WTC11 (cell line): ENCODE measurements at regions of chr1 and their contacts with region 1.

Region 1: GRCh38 chr1:110554871-110555801 is 36.2 kb upstream of the KCNA10 start:
- DNase-seq: peak; percentile 73
- ATAC-seq: peak; percentile 88
- H3K4me3 Mint-ChIP-seq: peak overlapping the region; percentile 66
- H3K27ac Mint-ChIP-seq: no peak overlapping the region
- H3K4me1 Mint-ChIP-seq: peaks cover 8% of the 10 kb centered on the region
- H3K27me3 Mint-ChIP-seq: peaks cover 65% of the 10 kb centered on the region
- CTCF ChIP-seq: peak; percentile 59

Region 2: GRCh38 chr1:110407260-110408210 is 147.6 kb before region 1 on chr1 and contains the start of gene LAMTOR5:
- CTCF ChIA-PET with region 1: no interaction called
- POLR2A ChIA-PET with region 1: no interaction called
- DNase-seq: peak; percentile 87
- ATAC-seq: peak; percentile 89
- H3K4me3 Mint-ChIP-seq: peak within 1 kb of the TSS; percentile 97
- H3K27ac Mint-ChIP-seq: peak within 1 kb of the TSS; percentile 98
- H3K4me1 Mint-ChIP-seq: peaks cover 14% of the 10 kb centered on the region
- H3K27me3 Mint-ChIP-seq: 0 out of 2 replicates have a peak, but pooled peaks cover 2% of the 10 kb centered on the region
- CTCF ChIP-seq: no peak
- total RNA-seq, gene LAMTOR5: 76.0 to 106 TPM (median 93.0 TPM) in 3 replicates

Region 3: DNA sequence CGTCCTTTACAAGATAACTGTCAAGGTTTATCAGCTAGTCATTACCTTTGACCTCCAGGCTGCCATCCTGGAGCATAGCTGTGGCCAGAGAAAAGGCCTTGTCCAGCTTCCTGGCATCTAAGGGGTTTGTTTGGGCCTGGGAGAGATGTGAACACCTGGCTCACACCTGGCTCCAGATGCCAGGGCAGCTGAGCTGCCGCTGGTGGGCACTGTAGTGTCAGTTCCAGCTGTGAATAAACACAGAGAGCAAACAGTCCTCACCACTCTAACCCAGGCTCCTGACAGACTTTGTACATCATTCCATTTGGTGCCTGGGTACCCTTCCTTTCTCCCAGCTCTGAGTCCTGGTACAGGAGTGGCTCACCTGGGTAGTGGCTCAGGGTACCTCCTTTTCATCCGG is 21.9 kb before region 1 on chr1:
- CTCF ChIA-PET with region 1: interaction called, 11 read pairs
- POLR2A ChIA-PET with region 1: no interaction called
- DNase-seq: no peak
- ATAC-seq: no peak
- H3K4me3 Mint-ChIP-seq: no peak overlapping the region
- H3K27ac Mint-ChIP-seq: no peak overlapping the region
- H3K4me1 Mint-ChIP-seq: no peaks in the 10 kb centered on the region
- H3K27me3 Mint-ChIP-seq: peaks cover 11% of the 10 kb centered on the region
- CTCF ChIP-seq: no peak

Region 4: DNA sequence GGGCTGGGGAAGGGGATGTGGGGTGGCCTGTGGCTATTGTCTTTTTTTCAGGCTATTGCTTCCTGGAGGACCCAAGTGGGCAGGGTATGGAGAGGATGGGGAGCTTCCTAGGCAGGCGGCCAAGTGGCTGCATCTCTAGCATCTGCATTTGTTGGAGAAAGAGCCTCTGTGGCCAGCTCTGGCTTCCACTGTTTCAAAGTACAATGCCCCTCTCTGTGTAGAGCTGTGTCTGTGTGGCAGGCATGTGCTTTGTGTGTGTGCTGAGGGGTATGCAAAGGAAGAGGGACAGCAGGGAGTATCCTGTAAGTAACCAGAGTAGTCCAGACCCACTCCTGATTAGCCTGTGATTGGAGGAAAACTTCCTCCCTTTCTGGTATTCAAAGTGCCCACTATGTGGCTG is 10.4 kb after region 1 on chr1:
- CTCF ChIA-PET with region 1: interaction called, 12 read pairs
- POLR2A ChIA-PET with region 1: no interaction called
- DNase-seq: no peak
- ATAC-seq: peak; percentile 67
- H3K4me3 Mint-ChIP-seq: no peak overlapping the region
- H3K27ac Mint-ChIP-seq: no peak overlapping the region
- H3K4me1 Mint-ChIP-seq: peaks cover 10% of the 10 kb centered on the region
- H3K27me3 Mint-ChIP-seq: peaks cover 21% of the 10 kb centered on the region
- CTCF ChIP-seq: no peak

Region 5: GRCh38 chr1:110605901-110606656 is 50.9 kb after region 1 on chr1 and contains the start of gene KCNA2:
- CTCF ChIA-PET with region 1: interaction called, 57 read pairs
- POLR2A ChIA-PET with region 1: interaction called, 7 read pairs
- DNase-seq: peak; percentile 68
- ATAC-seq: peak; percentile 71
- H3K4me3 Mint-ChIP-seq: peak within 1 kb of the TSS; percentile 79
- H3K27ac Mint-ChIP-seq: no peak within 1 kb of the TSS
- H3K4me1 Mint-ChIP-seq: peaks cover 15% of the 10 kb centered on the region
- H3K27me3 Mint-ChIP-seq: peaks cover 79% of the 10 kb centered on the region
- CTCF ChIP-seq: no peak
- total RNA-seq, gene KCNA2: 0.41 to 0.87 TPM (median 0.50 TPM) in 3 replicates